ENCODE measurements at regions of chr1 and their contacts with region 1.

Region 1: DNA sequence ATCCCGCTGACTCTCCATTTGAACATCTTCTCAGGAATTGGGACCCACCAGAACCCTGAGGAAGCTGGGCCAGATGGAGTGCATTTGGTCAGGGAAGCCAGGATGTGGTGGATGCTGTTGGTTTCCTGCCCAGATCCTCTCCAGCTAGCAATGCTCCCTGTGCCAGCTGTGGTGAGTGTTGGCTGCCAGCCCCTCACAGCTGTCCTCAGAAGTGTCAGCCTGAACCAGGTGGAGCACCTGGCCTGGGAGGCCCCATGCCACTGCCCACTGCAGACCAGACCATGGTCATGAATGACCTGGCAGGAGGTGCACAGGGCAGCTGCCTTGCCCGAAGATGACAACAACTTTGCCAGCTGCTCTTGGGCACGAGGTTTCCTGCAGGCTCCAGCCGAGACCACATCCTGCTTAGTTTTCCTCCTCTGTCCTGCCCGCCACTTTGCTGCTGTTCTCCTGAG is 54.4 kb downstream of the PRSS38 start:
- DNase-seq: peak; percentile 25
- H3K4me3 ChIP-seq: no peak overlapping the region
- H3K27ac ChIP-seq: no peak overlapping the region
- H3K4me1 ChIP-seq: peaks cover 12% of the 10 kb centered on the region
- H3K27me3 ChIP-seq: no peaks in the 10 kb centered on the region
- CTCF ChIP-seq: no peak

Region 2: GRCh38 chr1:227913764-227914721 is 44.2 kb after region 1 on chr1:
- CTCF ChIA-PET with region 1: no interaction called
- dilution Hi-C with region 1: loop called (anchors 5 kb)
- in situ Hi-C with region 1: no loop called
- intact Hi-C with region 1: no loop called
- DNase-seq: no peak
- H3K4me3 ChIP-seq: no peak overlapping the region
- H3K27ac ChIP-seq: no peak overlapping the region
- H3K4me1 ChIP-seq: peaks cover 32% of the 10 kb centered on the region
- H3K27me3 ChIP-seq: no peaks in the 10 kb centered on the region
- CTCF ChIP-seq: no peak

Measured in mammary epithelial cell (primary cell).